ENCODE measurements at regions of chr18 and their contacts with region 1.

Region 1: GRCh38 chr18:28855524-28855923 is 678.6 kb upstream of the CDH2 start:
- DNase-seq: no peak
- ATAC-seq: no peak
- H3K4me3 ChIP-seq: no peak overlapping the region
- H3K4me3 Mint-ChIP-seq: no peak overlapping the region
- H3K27ac ChIP-seq: no peak overlapping the region
- H3K27ac Mint-ChIP-seq: no peak overlapping the region
- H3K4me1 ChIP-seq: no peaks in the 10 kb centered on the region
- H3K4me1 Mint-ChIP-seq: no peaks in the 10 kb centered on the region
- H3K27me3 ChIP-seq: no peaks in the 10 kb centered on the region
- H3K27me3 Mint-ChIP-seq: no peaks in the 10 kb centered on the region
- CTCF ChIP-seq: no peak

Region 2: DNA sequence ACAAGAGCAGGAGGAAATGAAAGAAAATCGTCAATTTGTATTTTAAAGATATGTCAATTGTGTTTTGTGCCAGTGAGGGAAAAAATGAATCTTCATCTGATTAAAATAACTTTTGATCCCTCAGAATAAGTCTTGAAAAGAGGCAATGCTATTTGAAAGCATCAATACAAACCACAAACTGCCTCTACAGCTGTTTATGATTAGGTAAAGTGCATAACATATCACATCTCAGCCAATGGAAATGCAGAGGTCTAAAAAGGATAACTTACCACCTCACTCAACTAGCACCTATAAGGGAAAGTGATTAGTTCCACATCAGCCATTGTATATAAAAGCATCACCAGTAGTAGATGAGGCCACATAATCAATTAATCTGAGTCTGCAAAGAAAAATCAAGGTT is 186.4 kb before region 1 on chr18:
- CTCF ChIA-PET with region 1: no interaction called
- POLR2A ChIA-PET with region 1: no interaction called
- intact Hi-C with region 1: no loop called
- DNase-seq: no peak
- ATAC-seq: no peak
- H3K4me3 ChIP-seq: no peak overlapping the region
- H3K4me3 Mint-ChIP-seq: no peak overlapping the region
- H3K27ac ChIP-seq: no peak overlapping the region
- H3K27ac Mint-ChIP-seq: no peak overlapping the region
- H3K4me1 ChIP-seq: no peaks in the 10 kb centered on the region
- H3K4me1 Mint-ChIP-seq: no peaks in the 10 kb centered on the region
- H3K27me3 ChIP-seq: no peaks in the 10 kb centered on the region
- H3K27me3 Mint-ChIP-seq: no peaks in the 10 kb centered on the region
- CTCF ChIP-seq: no peak

Region 3: GRCh38 chr18:28916456-28916855 is 60.9 kb after region 1 on chr18:
- CTCF ChIA-PET with region 1: no interaction called
- POLR2A ChIA-PET with region 1: no interaction called
- intact Hi-C with region 1: loop called in 1 of 2 experiments (anchors 10 kb)
- DNase-seq: no peak
- ATAC-seq: no peak
- H3K4me3 ChIP-seq: no peak overlapping the region
- H3K4me3 Mint-ChIP-seq: no peak overlapping the region
- H3K27ac ChIP-seq: no peak overlapping the region
- H3K27ac Mint-ChIP-seq: no peak overlapping the region
- H3K4me1 ChIP-seq: no peaks in the 10 kb centered on the region
- H3K4me1 Mint-ChIP-seq: no peaks in the 10 kb centered on the region
- H3K27me3 ChIP-seq: no peaks in the 10 kb centered on the region
- H3K27me3 Mint-ChIP-seq: no peaks in the 10 kb centered on the region
- CTCF ChIP-seq: no peak